Sigmoid colon (tissue), 7 donors: ENCODE measurements at regions of chr2 and their contacts with region 1.

Region 1: GRCh38 chr2:160582490-160583145 is 89.0 kb upstream of the RBMS1 start:
- DNase-seq: no peak
- H3K4me3 ChIP-seq: no peak overlapping the region
- H3K27ac ChIP-seq: peak overlapping the region; percentile 58 to 76 (median 70)
- H3K4me1 ChIP-seq: peaks cover 0 to 33% (median 27%) of the 10 kb centered on the region in 4 donors
- H3K27me3 ChIP-seq: no peaks in the 10 kb centered on the region
- CTCF ChIP-seq: no peak
- EP300 ChIP-seq: no peak
- POLR2A ChIP-seq: no peak

Region 2: DNA sequence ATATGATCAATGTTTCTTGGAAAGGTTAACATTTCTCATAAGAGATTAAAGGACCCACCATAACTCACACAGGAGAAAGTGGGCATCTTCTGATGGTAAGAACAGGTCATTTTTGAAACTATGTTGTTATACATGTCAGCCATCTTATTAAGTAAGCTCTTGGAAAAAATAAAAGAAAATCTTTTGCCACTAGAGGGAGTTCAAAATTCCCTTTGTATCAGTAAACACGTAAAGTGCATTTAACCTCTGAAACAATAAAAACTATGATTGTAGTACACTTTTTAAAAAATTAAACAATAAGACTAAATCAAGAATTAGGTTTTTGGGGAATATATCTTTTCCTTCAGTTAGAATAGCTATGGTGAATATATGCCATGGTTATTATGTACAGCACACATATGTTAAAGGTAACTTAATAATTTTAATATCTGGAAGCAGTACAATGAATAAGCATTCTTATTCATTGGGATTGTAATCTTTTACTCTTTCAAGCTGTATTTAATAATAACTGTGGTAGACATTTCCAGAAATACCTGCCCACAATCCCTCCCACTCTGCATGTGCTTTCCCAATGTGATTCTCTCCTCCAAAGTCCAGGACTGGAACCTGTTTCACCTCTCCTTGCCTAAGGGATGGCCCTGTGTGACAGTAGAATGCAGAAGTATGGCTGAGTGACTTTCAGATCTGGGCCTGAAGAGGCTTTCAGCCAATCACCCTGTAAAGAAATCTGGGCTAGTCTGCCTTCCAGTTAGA is 153.2 kb before region 1 on chr2:
- intact Hi-C with region 1: loop called (anchors 10 kb)
- DNase-seq: no peak
- H3K4me3 ChIP-seq: no peak overlapping the region
- H3K27ac ChIP-seq: peak overlapping the region; percentile 58 to 77 (median 66)
- H3K4me1 ChIP-seq: peaks cover 0 to 62% (median 30%) of the 10 kb centered on the region in 4 donors
- H3K27me3 ChIP-seq: no peaks in the 10 kb centered on the region
- CTCF ChIP-seq: peak; percentile 25 to 60 (median 44)
- EP300 ChIP-seq: no peak
- POLR2A ChIP-seq: no peak

Region 3: GRCh38 chr2:160869411-160869810 is 286.8 kb after region 1 on chr2:
- intact Hi-C with region 1: no loop called
- DNase-seq: no peak
- H3K4me3 ChIP-seq: no peak overlapping the region
- H3K27ac ChIP-seq: peak overlapping the region in 1 of 4 donors; percentile 41
- H3K4me1 ChIP-seq: no peaks in the 10 kb centered on the region
- H3K27me3 ChIP-seq: no peaks in the 10 kb centered on the region
- CTCF ChIP-seq: no peak
- EP300 ChIP-seq: no peak
- POLR2A ChIP-seq: no peak

Region 4: GRCh38 chr2:160952464-160953254 is 370.0 kb after region 1 on chr2:
- intact Hi-C with region 1: no loop called
- DNase-seq: peak; percentile 85
- H3K4me3 ChIP-seq: peak overlapping the region in 3 of 4 donors; percentile 24 to 34 (median 31)
- H3K27ac ChIP-seq: peak overlapping the region; percentile 52 to 79 (median 74)
- H3K4me1 ChIP-seq: peaks cover 0 to 33% (median 20%) of the 10 kb centered on the region in 4 donors
- H3K27me3 ChIP-seq: no peaks in the 10 kb centered on the region
- CTCF ChIP-seq: no peak
- EP300 ChIP-seq: peak in 3 of 4 donors; percentile 21 to 26 (median 24)
- POLR2A ChIP-seq: no peak